ENCODE measurements at regions of chr10 and their contacts with region 1.

Region 1: DNA sequence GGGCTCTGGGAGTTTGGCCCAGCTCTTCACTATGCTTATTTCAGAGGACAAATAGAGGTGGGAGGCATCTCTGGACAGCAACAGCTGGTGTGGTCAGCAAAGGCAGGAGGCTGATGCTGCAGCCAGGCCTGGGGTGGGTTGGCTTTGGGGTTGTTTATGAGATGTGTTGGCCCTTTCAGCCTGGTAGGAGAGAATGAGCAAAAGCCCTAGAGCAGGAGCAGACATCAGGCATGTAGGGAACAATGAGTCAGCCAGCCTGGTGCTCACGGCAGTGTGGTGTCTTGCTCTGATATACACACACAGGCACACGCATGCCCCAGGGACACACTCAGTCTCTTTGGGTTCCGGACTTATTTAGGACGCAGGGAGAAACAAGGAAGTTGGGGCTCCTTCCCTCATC is 157.1 kb downstream of the PRKCQ start:
- DNase-seq: no peak
- ATAC-seq: no peak
- H3K4me3 ChIP-seq: no peak overlapping the region
- H3K27ac ChIP-seq: no peak overlapping the region
- H3K4me1 ChIP-seq: no peaks in the 10 kb centered on the region
- H3K27me3 ChIP-seq: no peaks in the 10 kb centered on the region
- CTCF ChIP-seq: no peak

Region 2: DNA sequence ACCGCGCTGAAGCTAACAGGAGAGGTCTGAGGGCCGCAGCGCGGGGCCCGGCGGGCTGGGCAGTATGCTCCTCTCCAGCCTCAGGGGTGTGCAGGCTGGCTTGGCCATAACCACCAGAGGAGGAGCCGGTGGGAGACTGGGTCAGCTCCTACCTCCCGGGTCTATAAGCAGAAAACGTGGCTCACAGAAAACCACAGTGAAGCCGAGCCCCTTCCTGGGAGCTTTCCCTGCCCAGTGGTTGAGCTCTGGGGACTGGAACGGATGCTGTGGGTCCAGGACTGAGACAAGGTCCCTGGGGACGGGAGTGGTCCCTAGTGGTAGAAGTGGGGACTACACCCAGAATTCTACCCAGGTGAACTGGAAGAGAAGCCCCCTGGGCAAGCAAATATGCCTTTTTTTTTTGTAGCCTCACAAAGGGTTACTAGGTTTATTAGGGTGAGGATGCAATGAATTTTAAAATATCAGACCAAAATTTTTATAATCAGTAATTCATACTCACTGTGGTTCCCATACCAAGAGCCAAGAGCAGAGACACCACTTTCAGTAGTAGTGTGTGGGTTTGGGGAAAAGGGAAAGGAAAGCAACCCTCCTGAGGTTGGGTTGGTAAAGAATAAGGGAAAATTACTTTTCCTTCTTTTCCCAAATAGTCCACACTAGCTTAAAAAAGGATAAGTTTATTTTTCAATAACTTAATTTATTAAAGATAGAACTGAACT is 225.0 kb after region 1 on chr10:
- intact Hi-C with region 1: loop called in 1 of 3 experiments (anchors 10 kb)
- DNase-seq: peak; percentile 21 to 56 (median 42)
- ATAC-seq: peak; percentile 72 to 90 (median 88)
- H3K4me3 ChIP-seq: no peak overlapping the region
- H3K27ac ChIP-seq: no peak overlapping the region
- H3K4me1 ChIP-seq: no peaks in the 10 kb centered on the region
- H3K27me3 ChIP-seq: peaks cover 0 to 12% (median 0%) of the 10 kb centered on the region in 4 donors
- CTCF ChIP-seq: peak; percentile 45 to 76 (median 66)

Region 3: GRCh38 chr10:6678211-6678803 is 255.3 kb after region 1 on chr10:
- intact Hi-C with region 1: loop called in 1 of 3 experiments (anchors 10 kb)
- DNase-seq: peak in 5 of 6 donors; percentile 21 to 57 (median 25)
- ATAC-seq: peak; percentile 64 to 77 (median 73)
- H3K4me3 ChIP-seq: no peak overlapping the region
- H3K27ac ChIP-seq: no peak overlapping the region
- H3K4me1 ChIP-seq: no peaks in the 10 kb centered on the region
- H3K27me3 ChIP-seq: peaks cover 0 to 5% (median 0%) of the 10 kb centered on the region in 4 donors
- CTCF ChIP-seq: peak; percentile 30 to 51 (median 41)